A549 (cell line): ENCODE measurements at regions of chr5 and their contacts with region 1.

Region 1: DNA sequence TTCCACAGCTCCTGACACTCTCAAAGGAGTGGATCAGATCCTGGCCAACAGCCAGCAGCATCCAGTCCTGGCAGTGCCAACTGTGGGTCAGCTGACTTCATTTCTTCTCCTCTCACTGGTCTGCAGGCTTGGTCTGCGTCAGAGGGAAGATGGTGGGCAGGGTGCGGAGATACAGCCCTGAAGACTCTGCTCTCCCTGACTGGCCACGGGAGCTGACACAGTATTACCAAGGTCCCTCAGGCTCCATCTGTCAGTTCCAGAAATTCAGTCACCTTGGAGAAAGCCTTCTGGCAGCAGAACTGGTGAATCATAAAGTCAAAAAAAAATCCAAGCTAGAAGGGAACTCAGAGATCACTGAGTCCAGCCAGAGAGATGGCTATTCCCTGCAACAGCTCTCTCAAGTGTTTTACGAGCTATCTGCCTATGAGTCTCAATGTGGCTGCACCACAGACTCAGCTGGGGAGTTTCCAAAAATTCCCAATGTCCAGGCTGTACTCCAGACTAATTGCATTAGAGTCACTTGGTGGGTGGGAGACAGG is 28.0 kb downstream of the C1QTNF2 start:
- DNase-seq: no peak
- ATAC-seq: no peak
- H3K4me3 ChIP-seq: no peak overlapping the region
- H3K27ac ChIP-seq: peak overlapping the region in 1 of 2 experiments; percentile 39; a peak in 2 of 6 replicates
- H3K4me1 ChIP-seq: peaks cover 15% of the 10 kb centered on the region
- CTCF ChIP-seq: no peak
- EP300 ChIP-seq: no peak
- POLR2A ChIP-seq: no peak
- RAD21 ChIP-seq: no peak

Region 2: DNA sequence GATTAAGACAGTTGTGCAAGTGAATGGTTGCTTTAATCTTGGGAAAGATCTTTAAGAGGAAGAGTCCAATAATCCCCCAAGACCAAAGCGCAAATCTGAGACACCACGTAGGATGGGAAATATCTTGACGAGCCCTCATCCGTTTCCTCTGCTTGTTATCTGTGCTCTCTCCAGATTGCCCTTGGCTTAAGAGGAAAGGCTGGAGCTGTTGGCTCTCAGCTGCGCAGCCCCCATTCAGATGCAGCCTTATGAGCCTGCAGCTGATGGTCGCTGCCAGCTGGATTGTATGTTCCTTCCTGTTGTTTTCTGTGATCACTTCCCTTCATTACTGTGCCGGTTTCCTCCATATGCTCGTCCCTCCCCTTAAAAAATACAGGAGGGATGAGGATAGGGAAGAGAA is 271.0 kb before region 1 on chr5:
- CTCF ChIA-PET with region 1: interaction called, 12 read pairs
- POLR2A ChIA-PET with region 1: no interaction called
- DNase-seq: no peak
- ATAC-seq: no peak
- H3K4me3 ChIP-seq: no peak overlapping the region
- H3K27ac ChIP-seq: no peak overlapping the region
- H3K4me1 ChIP-seq: no peaks in the 10 kb centered on the region
- CTCF ChIP-seq: no peak
- EP300 ChIP-seq: no peak
- POLR2A ChIP-seq: no peak
- RAD21 ChIP-seq: no peak

Region 3: GRCh38 chr5:160199410-160199911 is 143.0 kb before region 1 on chr5:
- CTCF ChIA-PET with region 1: interaction called, 244 read pairs
- POLR2A ChIA-PET with region 1: no interaction called
- DNase-seq: peak; percentile 53 to 77
- ATAC-seq: peak; percentile 94 to 99
- H3K4me3 ChIP-seq: peak overlapping the region; percentile 35
- H3K27ac ChIP-seq: peak overlapping the region; percentile 75 to 86
- H3K4me1 ChIP-seq: no peaks in the 10 kb centered on the region
- CTCF ChIP-seq: peak; percentile 98
- EP300 ChIP-seq: no peak
- POLR2A ChIP-seq: peak; percentile 12; the same call in 1 of the 2 replicates
- RAD21 ChIP-seq: peak; percentile 77 to 96

Region 4: DNA sequence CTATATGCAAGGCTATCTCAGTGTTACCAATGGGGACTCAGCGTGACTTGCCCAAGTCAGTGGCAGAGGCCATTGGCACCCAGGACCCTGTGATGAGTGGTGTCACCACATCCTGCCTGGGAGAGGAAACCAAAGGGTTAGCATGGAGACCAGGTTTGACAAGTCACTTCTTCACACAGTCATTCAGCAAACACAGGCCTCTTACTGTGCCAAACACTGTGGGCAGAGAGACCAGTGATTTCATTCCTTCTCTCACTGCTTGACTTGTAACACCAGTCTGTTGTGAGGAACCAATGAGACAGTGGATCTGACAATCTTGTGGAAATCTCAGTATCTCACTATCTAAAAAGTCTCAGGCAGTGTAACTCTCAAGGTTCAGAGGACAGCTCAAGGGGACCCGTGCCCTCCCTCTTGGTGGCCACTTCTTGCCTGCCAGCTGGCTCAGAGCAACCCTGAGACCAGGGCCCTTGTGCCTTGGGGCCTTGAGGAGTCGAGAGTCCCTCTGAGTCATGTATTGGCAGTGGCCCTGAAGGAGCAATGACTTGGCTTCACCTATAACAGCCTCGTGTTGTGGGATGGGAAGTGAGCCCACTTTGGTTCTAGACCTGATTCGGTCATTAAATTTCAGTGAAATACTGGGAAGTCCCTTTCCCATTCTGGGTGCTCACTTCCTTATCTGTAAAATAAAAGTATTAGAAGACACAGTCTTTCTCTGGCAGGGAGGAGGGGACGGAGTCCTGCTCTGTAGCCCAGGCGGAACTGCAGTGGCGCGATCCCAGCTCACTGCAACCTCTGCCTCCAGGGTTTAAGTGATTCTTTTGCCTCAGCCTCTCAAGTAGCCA is 111.6 kb before region 1 on chr5:
- CTCF ChIA-PET with region 1: interaction called, 17 read pairs
- POLR2A ChIA-PET with region 1: no interaction called
- DNase-seq: no peak
- ATAC-seq: peak; percentile 39 to 43; a peak in 3 of 6 replicates
- H3K4me3 ChIP-seq: no peak overlapping the region
- H3K27ac ChIP-seq: no peak overlapping the region
- H3K4me1 ChIP-seq: no peaks in the 10 kb centered on the region
- CTCF ChIP-seq: no peak
- EP300 ChIP-seq: no peak
- POLR2A ChIP-seq: no peak
- RAD21 ChIP-seq: no peak

Region 5: DNA sequence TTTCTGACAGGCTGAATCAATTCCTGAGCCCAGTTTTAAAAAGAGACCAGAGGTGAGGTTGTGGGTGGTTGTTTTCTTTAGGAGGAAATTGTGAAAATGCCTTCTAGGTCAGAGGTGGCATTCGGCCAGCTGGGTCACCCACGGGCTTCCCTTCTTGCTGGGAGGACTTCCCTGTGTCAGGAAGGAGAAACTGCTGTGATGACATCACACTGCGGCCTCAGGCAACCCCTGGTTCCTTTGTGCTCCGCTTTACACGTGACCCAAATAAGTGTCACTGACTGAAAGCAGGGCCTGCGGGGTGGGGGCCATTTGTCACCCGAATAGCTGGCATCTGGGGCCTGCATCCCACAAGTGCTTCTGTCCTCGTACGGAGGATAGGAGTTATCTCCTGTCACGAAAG is 73.5 kb before region 1 on chr5:
- CTCF ChIA-PET with region 1: interaction called, 19 read pairs
- POLR2A ChIA-PET with region 1: no interaction called
- DNase-seq: no peak
- ATAC-seq: no peak
- H3K4me3 ChIP-seq: no peak overlapping the region
- H3K27ac ChIP-seq: no peak overlapping the region
- H3K4me1 ChIP-seq: no peaks in the 10 kb centered on the region
- CTCF ChIP-seq: no peak
- EP300 ChIP-seq: no peak
- POLR2A ChIP-seq: no peak
- RAD21 ChIP-seq: no peak

Region 6: GRCh38 chr5:160324886-160325285 is 17.6 kb before region 1 on chr5:
- CTCF ChIA-PET with region 1: interaction called, 24 read pairs
- POLR2A ChIA-PET with region 1: no interaction called
- DNase-seq: no peak
- ATAC-seq: no peak
- H3K4me3 ChIP-seq: no peak overlapping the region
- H3K27ac ChIP-seq: no peak overlapping the region
- H3K4me1 ChIP-seq: 0 out of 3 replicates have a peak, but pooled peaks cover 4% of the 10 kb centered on the region
- CTCF ChIP-seq: no peak
- EP300 ChIP-seq: no peak
- POLR2A ChIP-seq: no peak
- RAD21 ChIP-seq: no peak

Region 7: DNA sequence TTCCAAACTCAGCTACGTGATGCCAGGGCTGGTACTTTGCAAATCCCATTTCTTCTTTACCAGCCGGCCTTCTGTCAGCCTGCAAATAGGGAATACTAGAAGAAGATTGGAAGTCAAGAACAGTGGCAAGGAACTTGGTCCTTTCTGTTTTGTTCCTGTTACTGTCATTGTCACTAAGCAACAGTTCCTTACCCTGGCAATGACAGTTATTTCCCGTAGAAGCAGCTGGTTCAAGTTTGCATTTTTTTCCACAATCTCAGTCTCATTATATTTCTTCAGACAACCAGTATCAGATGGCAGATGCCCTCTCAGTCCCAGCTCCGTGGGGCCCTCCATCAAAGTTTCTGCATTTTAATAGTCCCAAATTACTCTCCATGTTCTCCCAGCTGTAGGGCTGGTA is 37.0 kb after region 1 on chr5:
- CTCF ChIA-PET with region 1: interaction called, 22 read pairs
- POLR2A ChIA-PET with region 1: no interaction called
- DNase-seq: no peak
- ATAC-seq: no peak
- H3K4me3 ChIP-seq: no peak overlapping the region
- H3K27ac ChIP-seq: no peak overlapping the region
- H3K4me1 ChIP-seq: no peaks in the 10 kb centered on the region
- CTCF ChIP-seq: no peak
- EP300 ChIP-seq: no peak
- POLR2A ChIP-seq: no peak
- RAD21 ChIP-seq: no peak